ENCODE measurements at regions of chr9 and their contacts with region 1.

Region 1: DNA sequence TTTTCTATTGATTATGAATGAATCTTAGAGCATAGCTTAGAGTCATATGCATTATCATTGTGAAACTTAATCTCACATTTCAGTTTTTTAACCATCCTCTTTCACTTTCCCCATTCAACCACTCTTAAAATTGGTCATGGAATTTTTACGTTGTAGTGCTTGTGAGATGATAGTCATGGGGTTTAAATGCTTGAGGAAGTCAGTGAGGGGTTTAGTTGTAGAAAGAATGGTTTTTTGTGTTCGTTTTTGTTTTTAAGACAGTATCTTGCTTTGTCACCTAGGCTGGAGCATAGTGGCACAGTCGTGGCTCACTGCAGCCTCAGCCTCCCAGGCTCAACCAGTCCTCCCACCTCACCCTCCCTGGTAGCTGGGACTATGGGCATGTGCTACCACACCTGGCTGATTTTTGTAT is 19.6 kb downstream of the UGCG start:
- DNase-seq: no peak
- H3K4me3 Mint-ChIP-seq: peak overlapping the region; percentile 2
- H3K27ac Mint-ChIP-seq: peak overlapping the region; percentile 74
- H3K4me1 Mint-ChIP-seq: peaks cover 54% of the 10 kb centered on the region
- H3K27me3 Mint-ChIP-seq: peaks cover 4% of the 10 kb centered on the region

Region 2: DNA sequence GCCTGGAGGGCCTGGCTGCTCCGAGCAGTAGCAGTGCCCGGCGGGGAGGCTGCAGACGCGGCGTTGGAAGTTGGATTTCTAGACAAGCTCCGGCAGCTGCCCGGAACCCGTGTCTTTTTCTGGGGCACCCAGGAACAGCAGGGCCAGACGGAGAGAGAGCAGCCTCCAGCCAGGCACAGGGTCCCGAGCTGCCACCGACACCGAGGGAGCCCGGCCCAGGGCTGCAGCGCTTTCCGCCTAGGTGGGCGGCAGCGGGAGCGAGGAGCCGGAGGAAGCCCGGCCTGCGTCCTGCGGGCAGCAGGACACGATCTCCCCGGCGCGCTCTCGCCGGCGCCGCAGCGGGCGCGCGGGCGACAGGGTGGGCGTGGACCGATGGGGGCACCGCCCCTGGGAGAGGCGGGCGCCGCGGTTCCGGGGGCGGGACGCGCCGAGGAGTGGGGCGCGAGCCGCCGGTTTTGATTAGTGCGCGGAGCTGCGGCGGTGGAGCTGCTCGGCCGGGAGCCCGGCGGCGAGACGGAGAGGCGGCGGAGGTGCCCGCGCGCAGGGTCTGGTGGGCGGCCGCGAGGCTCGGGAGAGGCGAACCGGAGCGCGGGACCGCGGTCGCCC is 19.8 kb before region 1 on chr9 and contains the start of gene UGCG:
- intact Hi-C with region 1: loop called (anchors 1 kb)
- DNase-seq: peak; percentile 86
- H3K4me3 Mint-ChIP-seq: peak within 1 kb of the TSS; percentile 90
- H3K27ac Mint-ChIP-seq: peak within 1 kb of the TSS; percentile 87
- H3K4me1 Mint-ChIP-seq: peaks cover 19% of the 10 kb centered on the region
- H3K27me3 Mint-ChIP-seq: peaks cover 4% of the 10 kb centered on the region
- total RNA-seq, gene UGCG: 22.6 and 22.9 TPM in 2 replicates

Region 3: DNA sequence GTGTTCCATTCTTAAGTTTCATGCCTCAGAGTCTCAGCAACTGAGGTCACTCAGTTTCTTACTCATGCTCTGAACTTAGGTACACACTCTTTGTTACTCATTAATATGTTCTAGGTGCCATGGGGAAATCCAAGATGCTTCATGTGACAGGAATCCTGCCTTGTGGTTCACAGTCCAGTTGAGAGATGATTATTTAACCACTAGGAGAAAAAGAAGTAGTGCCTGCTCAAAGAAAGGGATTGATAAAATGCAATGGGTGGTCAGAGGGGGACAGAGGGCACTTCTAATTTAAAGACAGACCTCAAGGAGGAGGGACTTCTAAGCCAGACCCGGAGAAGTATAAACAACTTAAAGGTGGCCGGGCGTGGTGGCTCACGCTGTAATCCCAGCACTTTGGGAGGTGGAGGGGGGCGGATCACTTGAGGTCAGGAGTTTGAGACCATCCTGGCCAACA is 49.4 kb after region 1 on chr9:
- intact Hi-C with region 1: loop called (anchors 1 kb)
- DNase-seq: no peak
- H3K4me3 Mint-ChIP-seq: no peak overlapping the region
- H3K27ac Mint-ChIP-seq: peak overlapping the region; percentile 65
- H3K4me1 Mint-ChIP-seq: peaks cover 7% of the 10 kb centered on the region
- H3K27me3 Mint-ChIP-seq: peaks cover 12% of the 10 kb centered on the region

Region 4: GRCh38 chr9:112037281-112038016 is 121.2 kb after region 1 on chr9:
- intact Hi-C with region 1: loop called (anchors 1 kb)
- DNase-seq: peak; percentile 74
- H3K4me3 Mint-ChIP-seq: peak overlapping the region; percentile 43
- H3K27ac Mint-ChIP-seq: peak overlapping the region; percentile 82
- H3K4me1 Mint-ChIP-seq: peaks cover 53% of the 10 kb centered on the region
- H3K27me3 Mint-ChIP-seq: peaks cover 16% of the 10 kb centered on the region

Region 5: DNA sequence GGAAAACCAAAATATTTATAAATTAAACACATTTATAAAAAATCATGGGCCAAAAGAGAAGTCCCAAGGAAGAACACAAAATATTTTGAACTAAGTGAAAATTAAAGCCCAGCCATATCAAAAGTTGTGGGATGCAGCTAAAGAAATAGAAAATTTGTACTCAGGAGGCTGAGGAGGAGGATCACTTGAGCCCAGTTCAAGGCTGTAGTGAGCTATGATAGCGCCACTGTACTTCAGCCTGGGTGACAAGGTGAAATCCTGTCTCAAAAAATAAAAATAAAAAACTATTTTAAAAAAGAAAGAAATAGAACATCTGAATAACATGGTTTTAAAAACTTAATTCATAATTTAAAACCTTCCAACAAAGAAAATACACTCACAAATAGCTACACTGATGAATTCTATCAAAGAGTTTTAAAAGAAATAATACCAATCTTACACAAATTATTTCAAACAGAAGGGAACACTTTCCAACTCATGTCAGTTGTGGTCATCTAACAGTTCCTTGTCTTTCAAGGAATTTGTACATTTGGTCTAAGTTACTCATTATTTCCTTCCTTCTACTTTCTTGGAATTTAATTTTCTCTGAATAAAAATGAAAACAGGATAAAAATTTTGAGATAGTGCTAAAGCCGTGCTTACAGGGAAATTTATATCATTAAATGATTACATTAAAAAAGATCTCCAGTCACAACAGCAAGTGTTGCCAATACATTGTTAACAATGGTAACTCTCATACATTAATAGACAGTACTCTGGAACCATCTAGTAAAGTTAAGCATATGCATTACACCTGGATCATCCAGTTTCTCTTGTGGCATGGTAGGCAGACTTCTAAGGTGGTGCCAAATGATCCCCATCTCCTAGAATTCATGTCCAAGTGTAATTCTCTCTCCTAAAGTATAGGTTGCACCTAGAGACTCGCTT is 399.4 kb after region 1 on chr9:
- intact Hi-C with region 1: loop called (anchors 5 kb)
- DNase-seq: no peak
- H3K4me3 Mint-ChIP-seq: peak overlapping the region; percentile 46
- H3K27ac Mint-ChIP-seq: peak overlapping the region; percentile 79
- H3K4me1 Mint-ChIP-seq: peaks cover 52% of the 10 kb centered on the region
- H3K27me3 Mint-ChIP-seq: peaks cover 1% of the 10 kb centered on the region

Measured in activated T-helper 1 cell treated with anti-CD3 and anti-CD28 coated beads, Interleukin-12 subunit alpha, Interleukin-12 subunit beta, Interleukin-2, Interleukin-4 antibody, amounts not matched to agents 30 ng/mL and 10 ng/mL and 1 ng/mL, durations not matched to agents 14 hours and 24 hours and 36 hours (primary cell).